CD4-positive, alpha-beta T cell (primary cell): ENCODE measurements at regions of chr2 and their contacts with region 1.

Region 1: GRCh38 chr2:196926562-196927375 is at the start of gene PGAP1:
- DNase-seq: peak; percentile 60 to 92 (median 77)
- ATAC-seq: peak; percentile 70
- H3K4me3 ChIP-seq: peak within 1 kb of the TSS; percentile 90
- H3K4me3 Mint-ChIP-seq: peak within 1 kb of the TSS; percentile 98
- H3K27ac ChIP-seq: peak within 1 kb of the TSS; percentile 43 to 61
- H3K27ac Mint-ChIP-seq: peak within 1 kb of the TSS; percentile 86
- H3K4me1 ChIP-seq: peaks cover 15% of the 10 kb centered on the region
- H3K4me1 Mint-ChIP-seq: peaks cover 43% of the 10 kb centered on the region
- H3K27me3 ChIP-seq: no peaks in the 10 kb centered on the region
- H3K27me3 Mint-ChIP-seq: no peaks in the 10 kb centered on the region
- CTCF ChIP-seq: no peak
- total RNA-seq, gene PGAP1: 10.3 to 11.3 TPM

Region 2: GRCh38 chr2:196468394-196468793 is 458.4 kb before region 1 on chr2:
- CTCF ChIA-PET with region 1: no interaction called
- POLR2A ChIA-PET with region 1: no interaction called
- intact Hi-C with region 1: no loop called
- DNase-seq: no peak
- ATAC-seq: no peak
- H3K4me3 ChIP-seq: no peak overlapping the region
- H3K4me3 Mint-ChIP-seq: no peak overlapping the region
- H3K27ac ChIP-seq: no peak overlapping the region
- H3K27ac Mint-ChIP-seq: no peak overlapping the region
- H3K4me1 ChIP-seq: no peaks in the 10 kb centered on the region
- H3K4me1 Mint-ChIP-seq: no peaks in the 10 kb centered on the region
- H3K27me3 ChIP-seq: peaks cover 0 to 5% of the 10 kb centered on the region in 2 experiments
- H3K27me3 Mint-ChIP-seq: peaks cover 38% of the 10 kb centered on the region
- CTCF ChIP-seq: no peak

Region 3: GRCh38 chr2:196798980-196799379 is 127.8 kb before region 1 on chr2:
- CTCF ChIA-PET with region 1: no interaction called
- POLR2A ChIA-PET with region 1: interaction called, 7 read pairs
- intact Hi-C with region 1: loop called in 1 of 2 experiments (anchors 5 kb)
- DNase-seq: no peak
- ATAC-seq: no peak
- H3K4me3 ChIP-seq: peak overlapping the region; percentile 92
- H3K4me3 Mint-ChIP-seq: peak overlapping the region; percentile 99
- H3K27ac ChIP-seq: peak overlapping the region in 1 of 2 donors; percentile 72
- H3K27ac Mint-ChIP-seq: peak overlapping the region; percentile 84
- H3K4me1 ChIP-seq: peaks cover 24% of the 10 kb centered on the region
- H3K4me1 Mint-ChIP-seq: peaks cover 36% of the 10 kb centered on the region
- H3K27me3 ChIP-seq: peaks cover 0 to 5% of the 10 kb centered on the region in 2 experiments
- H3K27me3 Mint-ChIP-seq: peaks cover 8% of the 10 kb centered on the region
- CTCF ChIP-seq: no peak

Region 4: GRCh38 chr2:196914867-196915460 is 11.8 kb before region 1 on chr2:
- CTCF ChIA-PET with region 1: interaction called, 3 read pairs
- POLR2A ChIA-PET with region 1: interaction called, 21 read pairs
- intact Hi-C with region 1: no loop called
- DNase-seq: peak in 5 of 14 experiments; percentile 17 to 77 (median 57)
- ATAC-seq: peak; percentile 97
- H3K4me3 ChIP-seq: no peak overlapping the region
- H3K4me3 Mint-ChIP-seq: peak overlapping the region; percentile 9
- H3K27ac ChIP-seq: peak overlapping the region in 1 of 2 donors; percentile 56
- H3K27ac Mint-ChIP-seq: peak overlapping the region; percentile 78
- H3K4me1 ChIP-seq: peaks cover 11% of the 10 kb centered on the region
- H3K4me1 Mint-ChIP-seq: peaks cover 16% of the 10 kb centered on the region
- H3K27me3 ChIP-seq: no peaks in the 10 kb centered on the region
- H3K27me3 Mint-ChIP-seq: no peaks in the 10 kb centered on the region
- CTCF ChIP-seq: no peak